Right ventricle myocardium superior (tissue), 1 donor: ENCODE measurements at regions of chr5 and their contacts with region 1.

Region 1: GRCh38 chr5:168494057-168494555 is 7.8 kb downstream of the RARS1 start:
- DNase-seq: no peak
- ATAC-seq: no peak

Region 2: GRCh38 chr5:168562279-168562678 is 68.2 kb after region 1 on chr5:
- intact Hi-C with region 1: loop called (anchors 10 kb)
- DNase-seq: no peak
- ATAC-seq: no peak